PC-9 (cell line): ENCODE measurements at regions of chr12 and their contacts with region 1.

Region 1: GRCh38 chr12:52980693-52981423 is 25.4 kb upstream of the EIF4B start:
- DNase-seq: peak; percentile 87 to 91
- H3K4me3 ChIP-seq: no peak overlapping the region
- H3K27ac ChIP-seq: no peak overlapping the region
- H3K4me1 ChIP-seq: peaks cover 26% of the 10 kb centered on the region
- H3K27me3 ChIP-seq: no peaks in the 10 kb centered on the region
- CTCF ChIP-seq: peak; percentile 98

Region 2: DNA sequence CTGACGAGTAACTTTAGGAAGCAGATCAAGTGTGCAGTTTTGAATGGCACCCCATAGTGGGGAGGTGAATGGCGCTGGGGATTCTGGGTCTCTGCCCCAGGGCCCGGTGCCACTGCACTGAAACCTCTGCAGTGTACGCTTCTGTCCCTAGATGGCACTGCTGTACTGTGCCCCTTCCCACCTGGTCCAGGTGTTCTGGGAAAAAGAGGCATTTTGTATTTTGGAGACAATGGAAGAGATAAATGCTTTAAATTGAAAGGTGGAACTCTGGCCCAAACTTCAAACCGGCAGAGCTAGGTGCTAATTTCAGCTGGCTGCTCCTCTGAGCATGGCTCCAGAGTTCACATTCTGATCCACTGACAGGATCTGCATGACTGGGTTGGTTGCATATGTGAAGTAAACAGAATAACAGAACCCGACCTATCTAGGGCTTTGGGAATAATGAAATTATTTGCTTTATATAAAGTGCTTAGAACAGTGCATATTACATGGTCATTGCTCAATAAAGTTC is 841.3 kb before region 1 on chr12:
- CTCF ChIA-PET with region 1: no interaction called
- POLR2A ChIA-PET with region 1: no interaction called
- intact Hi-C with region 1: loop called (anchors 1 kb)
- DNase-seq: peak; percentile 62 to 78
- H3K4me3 ChIP-seq: no peak overlapping the region
- H3K27ac ChIP-seq: no peak overlapping the region
- H3K4me1 ChIP-seq: peaks cover 22% of the 10 kb centered on the region
- H3K27me3 ChIP-seq: no peaks in the 10 kb centered on the region
- CTCF ChIP-seq: peak; percentile 94

Region 3: DNA sequence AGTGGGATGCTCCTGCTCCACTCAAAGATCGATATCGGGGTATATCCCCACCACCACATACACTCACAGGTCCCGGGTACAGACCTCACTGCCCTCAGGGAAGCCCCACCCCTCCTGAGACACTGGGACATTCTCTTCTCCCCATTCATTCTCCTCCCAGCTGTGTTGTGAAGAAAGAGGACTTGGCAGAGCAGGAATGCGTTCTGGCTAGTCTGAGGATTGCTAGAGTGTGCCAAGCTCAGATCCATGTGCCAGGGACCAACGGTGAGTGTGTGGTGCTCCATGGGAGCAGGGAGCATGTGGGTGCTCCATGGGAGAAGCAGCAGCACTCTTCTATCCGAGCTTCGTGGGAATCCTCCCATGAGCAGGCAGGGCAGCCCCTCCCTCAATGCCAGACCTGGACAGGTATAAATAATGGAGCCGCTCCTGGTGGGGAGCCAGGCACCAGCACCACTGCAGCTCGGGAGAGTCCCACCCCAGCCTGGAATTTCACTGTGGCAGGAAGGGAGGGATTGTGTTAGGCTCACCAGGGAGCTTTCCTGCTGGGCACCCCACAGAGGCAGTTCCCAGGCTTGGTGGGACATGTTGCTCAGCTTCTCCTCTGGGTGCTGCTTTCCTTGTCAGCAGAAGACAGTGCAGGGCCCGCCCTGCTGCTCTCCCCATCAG is 458.4 kb before region 1 on chr12:
- CTCF ChIA-PET with region 1: no interaction called
- POLR2A ChIA-PET with region 1: no interaction called
- intact Hi-C with region 1: loop called (anchors 10 kb)
- DNase-seq: peak; percentile 78 to 87
- H3K4me3 ChIP-seq: peak overlapping the region; percentile 31; the same call in 1 of the 2 replicates
- H3K27ac ChIP-seq: peak overlapping the region; percentile 96
- H3K4me1 ChIP-seq: peaks cover 66% of the 10 kb centered on the region
- H3K27me3 ChIP-seq: no peaks in the 10 kb centered on the region
- CTCF ChIP-seq: no peak

Region 4: GRCh38 chr12:52903285-52903854 is 77.5 kb before region 1 on chr12:
- CTCF ChIA-PET with region 1: interaction called, 20 read pairs
- POLR2A ChIA-PET with region 1: interaction called, 17 read pairs
- intact Hi-C with region 1: loop called (anchors 1 kb)
- DNase-seq: no peak
- H3K4me3 ChIP-seq: peak overlapping the region; percentile 97
- H3K27ac ChIP-seq: peak overlapping the region; percentile 93
- H3K4me1 ChIP-seq: peaks cover 69% of the 10 kb centered on the region
- H3K27me3 ChIP-seq: no peaks in the 10 kb centered on the region
- CTCF ChIP-seq: no peak

Region 5: GRCh38 chr12:53054112-53054833 is 73.4 kb after region 1 on chr12:
- CTCF ChIA-PET with region 1: interaction called, 19 read pairs
- POLR2A ChIA-PET with region 1: no interaction called
- intact Hi-C with region 1: no loop called
- DNase-seq: peak; percentile 87 to 94
- H3K4me3 ChIP-seq: peak overlapping the region; percentile 95
- H3K27ac ChIP-seq: peak overlapping the region; percentile 71
- H3K4me1 ChIP-seq: peaks cover 19% of the 10 kb centered on the region
- H3K27me3 ChIP-seq: no peaks in the 10 kb centered on the region
- CTCF ChIP-seq: no peak

Region 6: DNA sequence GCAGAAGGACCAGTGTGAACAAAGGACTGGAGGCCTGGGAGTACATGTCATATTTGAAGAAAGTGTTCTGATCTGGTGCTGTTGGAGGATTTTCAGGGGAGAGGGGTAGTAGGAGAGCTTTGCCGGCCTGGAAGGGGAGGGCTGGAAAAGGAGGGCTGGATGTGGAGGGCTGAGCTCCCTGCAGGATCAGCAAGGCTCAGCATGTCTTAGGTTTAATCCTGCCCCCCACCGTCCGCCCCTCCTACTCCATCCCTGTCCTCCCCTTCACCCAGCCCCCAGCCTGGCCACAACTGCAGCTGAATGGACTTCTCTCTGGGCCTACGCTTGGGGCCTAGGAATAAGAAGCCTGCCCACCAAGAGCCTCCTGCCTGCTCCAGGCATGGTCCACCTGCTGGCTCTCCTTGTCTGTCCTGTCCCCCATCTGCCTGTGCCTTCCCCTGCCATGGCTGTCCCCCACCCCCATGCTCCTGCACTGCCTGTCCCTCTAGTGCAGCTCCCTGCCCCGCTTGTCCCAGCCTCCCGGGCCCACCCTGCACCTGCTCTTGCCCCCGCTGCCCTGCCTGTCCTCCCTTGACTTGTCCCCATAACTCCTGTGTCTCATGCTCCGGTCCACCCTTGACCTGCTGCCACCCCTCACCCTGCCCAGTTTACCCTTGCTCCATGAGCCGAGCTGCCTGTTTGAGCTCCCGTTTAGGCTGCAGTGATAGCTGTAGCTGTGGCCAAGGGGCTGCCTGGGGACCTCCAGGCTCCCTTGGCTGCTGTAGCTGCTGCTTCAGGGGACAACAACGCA is 261.0 kb after region 1 on chr12:
- CTCF ChIA-PET with region 1: no interaction called
- POLR2A ChIA-PET with region 1: no interaction called
- intact Hi-C with region 1: no loop called
- DNase-seq: no peak
- H3K4me3 ChIP-seq: no peak overlapping the region
- H3K27ac ChIP-seq: no peak overlapping the region
- H3K4me1 ChIP-seq: peaks cover 5% of the 10 kb centered on the region; the same call in 1 of the 2 replicates
- H3K27me3 ChIP-seq: no peaks in the 10 kb centered on the region
- CTCF ChIP-seq: no peak